ENCODE measurements at regions of chr6 and their contacts with region 1.

Region 1: DNA sequence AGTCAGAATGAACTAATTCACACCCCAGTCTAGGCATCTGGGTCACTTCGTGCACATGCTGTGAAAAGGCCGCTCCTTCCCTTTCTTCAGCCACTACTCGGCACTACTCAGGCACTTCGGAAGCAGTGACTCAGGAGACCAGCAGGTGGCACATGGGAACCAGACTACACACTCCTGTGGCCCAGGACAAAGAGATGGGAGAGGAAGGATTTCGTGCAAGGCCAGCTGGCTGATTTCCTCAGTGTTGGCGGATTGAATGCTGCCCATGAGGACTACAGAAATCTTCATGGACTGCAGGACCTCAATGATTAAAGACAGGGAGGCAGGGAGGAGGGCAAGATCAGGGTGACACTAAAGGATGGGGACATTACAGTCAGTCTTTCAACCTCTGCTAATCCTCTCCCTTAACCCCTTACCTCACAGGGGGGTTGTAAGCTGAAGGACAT is 117.8 kb upstream of the SPACA1 start:
- DNase-seq: peak; percentile 71
- ATAC-seq: peak; percentile 84
- H3K4me3 ChIP-seq: no peak overlapping the region
- H3K27ac ChIP-seq: peak overlapping the region; percentile 6; the same call in 1 of the 2 replicates
- H3K4me1 ChIP-seq: peaks cover 32% of the 10 kb centered on the region
- H3K27me3 ChIP-seq: no peaks in the 10 kb centered on the region
- CTCF ChIP-seq: peak; percentile 92 to 96 (median 92)
- EP300 ChIP-seq: peak in 1 of 2 experiments; percentile 7; a peak in 1 of 4 replicates
- POLR2A ChIP-seq: no peak
- RAD21 ChIP-seq: peak; percentile 98

Region 2: GRCh38 chr6:87393022-87393622 is 536.7 kb before region 1 on chr6:
- CTCF ChIA-PET with region 1: interaction called, 6 read pairs
- POLR2A ChIA-PET with region 1: no interaction called
- RAD21 ChIA-PET with region 1: interaction called, 11 read pairs
- SMC1A ChIA-PET with region 1: interaction called, 5 read pairs
- in situ Hi-C with region 1: no loop called
- intact Hi-C with region 1: loop called (anchors 5 kb)
- DNase-seq: no peak
- ATAC-seq: peak; percentile 84
- H3K4me3 ChIP-seq: no peak overlapping the region
- H3K27ac ChIP-seq: no peak overlapping the region
- H3K4me1 ChIP-seq: no peaks in the 10 kb centered on the region
- H3K27me3 ChIP-seq: no peaks in the 10 kb centered on the region
- CTCF ChIP-seq: peak; percentile 55 to 63 (median 58); a peak in 5 of 6 replicates
- EP300 ChIP-seq: no peak
- POLR2A ChIP-seq: no peak
- RAD21 ChIP-seq: peak; percentile 78

Region 3: GRCh38 chr6:87756858-87757257 is 173.0 kb before region 1 on chr6:
- CTCF ChIA-PET with region 1: no interaction called
- POLR2A ChIA-PET with region 1: no interaction called
- RAD21 ChIA-PET with region 1: interaction called, 3 read pairs
- SMC1A ChIA-PET with region 1: interaction called, 4 read pairs
- in situ Hi-C with region 1: no loop called
- intact Hi-C with region 1: loop called (anchors 10 kb)
- DNase-seq: peak; percentile 97
- ATAC-seq: peak; percentile 93
- H3K4me3 ChIP-seq: no peak overlapping the region
- H3K27ac ChIP-seq: peak overlapping the region; percentile 75
- H3K4me1 ChIP-seq: peaks cover 37% of the 10 kb centered on the region
- H3K27me3 ChIP-seq: no peaks in the 10 kb centered on the region
- CTCF ChIP-seq: no peak
- EP300 ChIP-seq: peak; percentile 90 to 93
- POLR2A ChIP-seq: no peak
- RAD21 ChIP-seq: peak; percentile 16; the same call in 1 of the 2 replicates

Region 4: GRCh38 chr6:87944541-87944954 is 14.7 kb after region 1 on chr6:
- CTCF ChIA-PET with region 1: interaction called, 21 read pairs
- POLR2A ChIA-PET with region 1: interaction called, 7 read pairs
- RAD21 ChIA-PET with region 1: interaction called, 5 read pairs
- SMC1A ChIA-PET with region 1: interaction called, 17 read pairs
- in situ Hi-C with region 1: no loop called
- intact Hi-C with region 1: no loop called
- DNase-seq: no peak
- ATAC-seq: peak; percentile 81
- H3K4me3 ChIP-seq: no peak overlapping the region
- H3K27ac ChIP-seq: no peak overlapping the region
- H3K4me1 ChIP-seq: no peaks in the 10 kb centered on the region
- H3K27me3 ChIP-seq: no peaks in the 10 kb centered on the region
- CTCF ChIP-seq: peak in 1 of 3 experiments; percentile 28; a peak in 2 of 6 replicates
- EP300 ChIP-seq: no peak
- POLR2A ChIP-seq: no peak
- RAD21 ChIP-seq: peak; percentile 37; the same call in 1 of the 2 replicates

Region 5: DNA sequence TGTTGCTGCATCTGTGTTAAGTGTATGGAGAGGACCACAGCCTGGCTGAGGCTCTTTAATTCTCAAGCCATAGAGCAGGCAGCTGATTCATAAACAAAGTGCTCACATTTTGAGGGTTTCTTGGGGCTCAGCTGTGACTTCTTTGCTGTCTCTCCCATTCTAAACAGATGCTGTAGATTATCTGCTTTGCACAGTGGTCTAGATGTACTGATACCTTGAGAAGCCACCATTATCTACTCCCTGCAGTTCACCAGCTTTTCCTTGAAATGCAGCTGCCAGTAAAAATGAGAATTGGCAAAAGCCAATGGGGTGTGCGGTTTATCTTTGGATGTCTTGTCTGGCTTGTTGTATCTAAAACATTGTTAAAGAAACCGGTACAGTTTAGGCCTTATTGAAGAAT is 241.4 kb after region 1 on chr6:
- CTCF ChIA-PET with region 1: interaction called, 18 read pairs
- POLR2A ChIA-PET with region 1: no interaction called
- RAD21 ChIA-PET with region 1: interaction called, 18 read pairs
- SMC1A ChIA-PET with region 1: interaction called, 23 read pairs
- in situ Hi-C with region 1: loop called (anchors 5 kb)
- intact Hi-C with region 1: loop called (anchors 1 kb)
- DNase-seq: no peak
- ATAC-seq: no peak
- H3K4me3 ChIP-seq: no peak overlapping the region
- H3K27ac ChIP-seq: no peak overlapping the region
- H3K4me1 ChIP-seq: no peaks in the 10 kb centered on the region
- H3K27me3 ChIP-seq: 0 out of 4 replicates have a peak, but pooled peaks cover 0 to 6% of the 10 kb centered on the region in 2 experiments
- CTCF ChIP-seq: no peak
- EP300 ChIP-seq: no peak
- POLR2A ChIP-seq: no peak
- RAD21 ChIP-seq: no peak

Region 6: DNA sequence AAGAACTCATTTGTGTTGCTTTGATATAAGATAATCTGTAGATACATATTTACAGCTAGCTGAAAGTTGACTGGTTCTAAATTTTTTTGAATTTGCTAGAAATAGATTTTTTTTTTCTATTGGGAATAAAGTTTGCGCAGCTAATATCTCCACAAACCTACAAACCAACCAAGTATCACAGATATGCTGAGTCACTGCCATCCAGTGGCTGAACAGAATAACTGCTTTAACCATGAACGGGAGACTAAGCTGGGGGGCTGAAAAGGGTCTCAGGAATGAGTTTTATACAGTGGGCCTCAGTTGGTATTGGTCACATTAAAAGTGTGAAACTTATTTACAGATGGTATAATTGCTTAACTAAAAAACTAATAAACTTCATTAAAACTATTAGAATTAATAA is 563.0 kb after region 1 on chr6:
- CTCF ChIA-PET with region 1: interaction called, 6 read pairs
- POLR2A ChIA-PET with region 1: no interaction called
- RAD21 ChIA-PET with region 1: interaction called, 11 read pairs
- SMC1A ChIA-PET with region 1: interaction called, 7 read pairs
- in situ Hi-C with region 1: no loop called
- intact Hi-C with region 1: loop called (anchors 1 kb)
- DNase-seq: no peak
- ATAC-seq: no peak
- H3K4me3 ChIP-seq: no peak overlapping the region
- H3K27ac ChIP-seq: peak overlapping the region; percentile 91
- H3K4me1 ChIP-seq: peaks cover 16% of the 10 kb centered on the region
- H3K27me3 ChIP-seq: no peaks in the 10 kb centered on the region
- CTCF ChIP-seq: peak; percentile 10 to 27 (median 15); a peak in 2 of 6 replicates
- EP300 ChIP-seq: no peak
- POLR2A ChIP-seq: no peak
- RAD21 ChIP-seq: peak; percentile 52

Region 7: GRCh38 chr6:88761237-88762031 is 831.6 kb after region 1 on chr6:
- CTCF ChIA-PET with region 1: no interaction called
- POLR2A ChIA-PET with region 1: no interaction called
- RAD21 ChIA-PET with region 1: interaction called, 3 read pairs
- SMC1A ChIA-PET with region 1: interaction called, 6 read pairs
- in situ Hi-C with region 1: no loop called
- intact Hi-C with region 1: loop called (anchors 5 kb)
- DNase-seq: peak; percentile 77
- ATAC-seq: peak; percentile 80
- H3K4me3 ChIP-seq: no peak overlapping the region
- H3K27ac ChIP-seq: peak overlapping the region; percentile 94
- H3K4me1 ChIP-seq: peaks cover 13% of the 10 kb centered on the region
- H3K27me3 ChIP-seq: no peaks in the 10 kb centered on the region
- CTCF ChIP-seq: peak; percentile 26 to 42 (median 37); a peak in 4 of 6 replicates
- EP300 ChIP-seq: peak; percentile 56 to 67; a peak in 2 of 4 replicates
- POLR2A ChIP-seq: no peak
- RAD21 ChIP-seq: peak; percentile 71

Measured in GM12878 (cell line).